HCT116 (cell line): ENCODE measurements at regions of chr3 and their contacts with region 1.

Region 1: GRCh38 chr3:52278510-52279069 is at the start of gene WDR82:
- DNase-seq: peak; percentile 79
- ATAC-seq: peak; percentile 89
- H3K4me3 ChIP-seq: peak within 1 kb of the TSS; percentile 94 to 99
- H3K27ac ChIP-seq: peak within 1 kb of the TSS; percentile 93
- H3K4me1 ChIP-seq: peaks cover 15 to 53% of the 10 kb centered on the region in 2 experiments; a peak in 3 of 4 replicates
- H3K27me3 ChIP-seq: no peaks in the 10 kb centered on the region
- CTCF ChIP-seq: peak in 2 of 3 experiments; percentile 49 to 54; a peak in 4 of 6 replicates
- POLR2A ChIP-seq: peak; percentile 56
- RAD21 ChIP-seq: peak; percentile 31; the same call in 1 of the 2 replicates
- total RNA-seq, gene WDR82: 89.7 TPM

Region 2: GRCh38 chr3:52238761-52239701 is 39.6 kb before region 1 on chr3 and contains the start of gene TWF2:
- CTCF ChIA-PET with region 1: interaction called, 7 read pairs
- POLR2A ChIA-PET with region 1: interaction called, 18 read pairs
- RAD21 ChIA-PET with region 1: no interaction called
- intact Hi-C with region 1: loop called (anchors 2 kb)
- DNase-seq: peak; percentile 31
- ATAC-seq: peak; percentile 76
- H3K4me3 ChIP-seq: peak within 1 kb of the TSS; percentile 87 to 93
- H3K27ac ChIP-seq: peak within 1 kb of the TSS; percentile 98
- H3K4me1 ChIP-seq: peaks cover 38 to 47% of the 10 kb centered on the region in 2 experiments
- H3K27me3 ChIP-seq: no peaks in the 10 kb centered on the region
- CTCF ChIP-seq: peak in 2 of 3 experiments; percentile 38 to 50; a peak in 3 of 6 replicates
- POLR2A ChIP-seq: peak; percentile 79
- RAD21 ChIP-seq: no peak
- total RNA-seq, gene TWF2: 100 TPM

Region 3: GRCh38 chr3:52291508-52292181 is 13.1 kb after region 1 on chr3:
- CTCF ChIA-PET with region 1: interaction called, 5 read pairs
- POLR2A ChIA-PET with region 1: interaction called, 10 read pairs
- RAD21 ChIA-PET with region 1: no interaction called
- intact Hi-C with region 1: no loop called
- DNase-seq: no peak
- ATAC-seq: peak; percentile 32; the same call in 1 of the 2 replicates
- H3K4me3 ChIP-seq: no peak overlapping the region
- H3K27ac ChIP-seq: no peak overlapping the region
- H3K4me1 ChIP-seq: peaks cover 5 to 11% of the 10 kb centered on the region in 2 experiments
- H3K27me3 ChIP-seq: no peaks in the 10 kb centered on the region
- CTCF ChIP-seq: peak; percentile 44 to 81 (median 69)
- POLR2A ChIP-seq: no peak
- RAD21 ChIP-seq: peak; percentile 87

Region 4: DNA sequence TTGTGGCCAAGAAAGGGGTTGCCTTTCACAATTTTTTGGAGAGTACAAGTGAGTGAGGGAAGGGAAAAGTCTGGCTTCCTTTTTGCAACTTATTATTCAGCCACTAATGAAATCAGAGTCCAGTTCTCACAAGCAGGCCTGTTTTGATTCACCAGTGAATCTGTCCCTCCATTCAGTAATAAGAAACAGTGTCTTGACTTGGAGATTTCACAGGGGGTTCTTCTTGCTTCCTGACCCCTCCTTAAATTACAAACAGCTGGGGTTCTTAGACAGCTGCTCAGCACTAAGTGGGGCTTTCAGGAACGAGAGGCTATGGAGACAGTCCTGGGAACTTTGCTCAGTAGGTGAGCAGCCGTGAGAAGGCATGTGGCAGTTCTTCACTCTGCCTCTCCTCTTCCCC is 141.8 kb after region 1 on chr3:
- CTCF ChIA-PET with region 1: no interaction called
- POLR2A ChIA-PET with region 1: no interaction called
- RAD21 ChIA-PET with region 1: no interaction called
- intact Hi-C with region 1: no loop called
- DNase-seq: no peak
- ATAC-seq: no peak
- H3K4me3 ChIP-seq: no peak overlapping the region
- H3K27ac ChIP-seq: no peak overlapping the region
- H3K4me1 ChIP-seq: no peaks in the 10 kb centered on the region
- H3K27me3 ChIP-seq: no peaks in the 10 kb centered on the region
- CTCF ChIP-seq: no peak
- POLR2A ChIP-seq: no peak
- RAD21 ChIP-seq: no peak